Naive thymus-derived CD4-positive, alpha-beta T cell (primary cell): ENCODE measurements at regions of chr16 and their contacts with region 1.

Region 1: GRCh38 chr16:695355-696089 is 5.3 kb upstream of the WDR24 start:
- DNase-seq: peak; percentile 53 to 81 (median 74)
- ATAC-seq: peak; percentile 90
- H3K4me3 ChIP-seq: peak overlapping the region; percentile 91
- H3K4me3 Mint-ChIP-seq: peak overlapping the region; percentile 76 to 86 (median 84)
- H3K27ac ChIP-seq: peak overlapping the region; percentile 54
- H3K27ac Mint-ChIP-seq: peak overlapping the region; percentile 20 to 86 (median 79)
- H3K4me1 ChIP-seq: peaks cover 22 to 26% of the 10 kb centered on the region in 2 donors
- H3K4me1 Mint-ChIP-seq: peaks cover 4 to 40% (median 23%) of the 10 kb centered on the region in 7 donors
- H3K27me3 ChIP-seq: no peaks in the 10 kb centered on the region
- H3K27me3 Mint-ChIP-seq: peaks cover 0 to 22% (median 0%) of the 10 kb centered on the region in 5 donors

Region 2: DNA sequence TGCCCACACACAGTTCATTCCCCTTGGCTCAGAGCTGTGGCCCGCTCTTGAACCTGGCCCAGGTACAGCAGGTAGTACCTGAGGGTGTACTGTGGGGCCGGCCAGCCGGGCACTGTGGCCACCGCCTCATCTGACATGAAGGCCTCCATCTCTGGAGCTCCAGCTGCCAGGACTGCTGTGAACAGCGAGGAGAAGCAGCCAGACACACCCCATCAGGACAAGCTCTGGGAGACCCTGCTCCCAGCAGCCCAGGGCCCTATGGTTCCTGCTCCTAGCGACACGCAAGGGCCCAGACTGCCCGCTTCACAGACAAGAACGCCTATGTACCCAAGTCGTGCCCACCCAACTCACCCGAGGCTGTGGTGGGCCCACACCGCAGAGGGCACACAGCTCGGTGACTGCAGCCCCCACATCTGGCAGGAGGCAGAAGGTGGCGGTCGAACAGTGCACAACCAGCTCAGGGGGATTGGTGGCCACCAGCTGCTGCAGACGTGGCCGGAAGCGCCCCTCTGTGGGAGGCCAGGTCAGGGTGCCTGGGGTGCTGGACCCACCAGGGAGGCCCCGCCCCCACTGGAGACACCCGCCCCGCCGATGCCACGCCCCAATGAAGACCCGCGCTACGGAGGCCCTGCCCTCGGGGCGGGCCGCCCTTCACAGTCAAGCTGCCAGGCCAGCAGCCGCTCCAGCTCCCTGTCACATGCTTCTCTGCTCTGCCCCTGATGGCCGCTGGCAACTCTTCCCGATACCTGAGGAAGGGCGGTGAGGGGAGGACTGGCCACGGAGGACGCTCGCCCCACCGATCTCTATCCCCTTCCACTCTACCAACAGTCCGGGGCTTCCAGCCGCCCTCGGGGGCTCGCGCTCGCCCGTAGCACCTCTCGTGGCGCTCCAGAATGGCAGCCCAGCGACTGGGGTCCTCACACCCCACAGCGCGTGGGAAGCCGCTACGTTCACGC is 16.4 kb before region 1 on chr16:
- CTCF ChIA-PET with region 1: no interaction called
- POLR2A ChIA-PET with region 1: interaction called, 34 read pairs
- intact Hi-C with region 1: loop called in 1 of 2 experiments (anchors 1 kb)
- DNase-seq: peak in 4 of 9 donors; percentile 41 to 65 (median 47)
- ATAC-seq: peak; percentile 6
- H3K4me3 ChIP-seq: peak overlapping the region; percentile 51
- H3K4me3 Mint-ChIP-seq: peak overlapping the region; percentile 71 to 89 (median 84)
- H3K27ac ChIP-seq: peak overlapping the region; percentile 26
- H3K27ac Mint-ChIP-seq: peak overlapping the region in 7 of 9 donors; percentile 56 to 93 (median 69)
- H3K4me1 ChIP-seq: peaks cover 5 to 17% of the 10 kb centered on the region in 2 donors
- H3K4me1 Mint-ChIP-seq: peaks cover 10 to 33% (median 23%) of the 10 kb centered on the region in 7 donors
- H3K27me3 ChIP-seq: no peaks in the 10 kb centered on the region
- H3K27me3 Mint-ChIP-seq: peaks cover 0 to 7% (median 0%) of the 10 kb centered on the region in 5 donors

Region 3: GRCh38 chr16:720990-721764 is 25.7 kb after region 1 on chr16 and contains the start of gene ANTKMT:
- CTCF ChIA-PET with region 1: interaction called, 4 read pairs
- POLR2A ChIA-PET with region 1: interaction called, 11 read pairs
- intact Hi-C with region 1: no loop called
- DNase-seq: peak; percentile 53 to 80 (median 65)
- ATAC-seq: peak; percentile 82
- H3K4me3 ChIP-seq: peak within 1 kb of the TSS; percentile 62
- H3K4me3 Mint-ChIP-seq: peak within 1 kb of the TSS; percentile 72 to 92 (median 82)
- H3K27ac ChIP-seq: peak within 1 kb of the TSS; percentile 60
- H3K27ac Mint-ChIP-seq: peak within 1 kb of the TSS in 7 of 9 donors; percentile 38 to 67 (median 55)
- H3K4me1 ChIP-seq: peaks cover 18 to 25% of the 10 kb centered on the region in 2 donors
- H3K4me1 Mint-ChIP-seq: peaks cover 0 to 30% (median 17%) of the 10 kb centered on the region in 7 donors
- H3K27me3 ChIP-seq: no peaks in the 10 kb centered on the region
- H3K27me3 Mint-ChIP-seq: peaks cover 0 to 20% (median 0%) of the 10 kb centered on the region in 5 donors
- total RNA-seq, gene ANTKMT: 11.9 to 20.7 (median 13.6) TPM

Region 4: GRCh38 chr16:740764-741505 is 45.4 kb after region 1 on chr16 and contains the start of gene CIAO3:
- CTCF ChIA-PET with region 1: no interaction called
- POLR2A ChIA-PET with region 1: interaction called, 10 read pairs
- intact Hi-C with region 1: no loop called
- DNase-seq: peak; percentile 85 to 99 (median 91)
- ATAC-seq: peak; percentile 93
- H3K4me3 ChIP-seq: peak within 1 kb of the TSS; percentile 81
- H3K4me3 Mint-ChIP-seq: peak within 1 kb of the TSS; percentile 63 to 85 (median 80)
- H3K27ac ChIP-seq: peak within 1 kb of the TSS; percentile 86
- H3K27ac Mint-ChIP-seq: peak within 1 kb of the TSS in 7 of 9 donors; percentile 26 to 81 (median 77)
- H3K4me1 ChIP-seq: peaks cover 4 to 10% of the 10 kb centered on the region in 2 donors
- H3K4me1 Mint-ChIP-seq: peaks cover 0 to 16% (median 5%) of the 10 kb centered on the region in 7 donors
- H3K27me3 ChIP-seq: no peaks in the 10 kb centered on the region
- H3K27me3 Mint-ChIP-seq: no peaks in the 10 kb centered on the region
- total RNA-seq, gene CIAO3: 39.0 to 55.5 (median 46.1) TPM